GM10248 (cell line): ENCODE measurements at regions of chr20 and their contacts with region 1.

Region 1: DNA sequence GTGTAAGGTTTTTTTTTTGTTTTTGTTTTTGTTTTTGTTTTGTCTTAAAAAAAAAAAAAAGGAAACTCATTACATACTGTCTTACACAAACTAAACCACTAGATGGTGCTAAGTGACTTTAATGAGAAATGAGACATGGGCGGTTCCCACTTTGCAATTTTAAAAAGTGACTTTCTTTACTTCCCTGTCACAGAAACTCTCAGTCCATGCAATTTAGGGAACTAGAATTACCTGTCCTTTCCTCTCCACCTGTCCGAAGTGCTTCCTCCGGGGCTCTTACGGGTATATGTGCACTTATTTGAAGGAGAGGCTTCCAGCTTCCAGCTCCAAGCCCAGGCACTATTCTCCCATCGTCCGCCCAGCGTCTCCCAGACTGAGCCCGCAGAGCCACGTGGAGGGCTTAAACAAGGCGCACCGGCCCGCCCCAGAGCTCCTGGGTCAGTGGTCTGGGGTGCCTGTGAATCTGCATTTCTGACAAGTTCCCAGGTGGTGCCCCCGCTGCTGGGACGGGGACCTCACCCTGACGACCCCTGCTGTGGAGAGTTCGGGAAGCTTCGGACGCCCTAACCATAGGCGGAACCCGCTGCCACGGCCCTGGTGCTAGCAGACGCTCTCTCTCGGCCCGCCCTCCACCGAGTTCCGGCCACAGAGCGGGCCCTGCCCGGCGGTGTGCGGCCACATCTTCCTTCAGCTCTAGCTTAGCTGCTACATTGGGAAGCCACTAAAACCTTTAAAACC is 26.1 kb downstream of the BFSP1 start:
- DNase-seq: peak; percentile 73
- CTCF ChIP-seq: peak; percentile 56

Region 2: DNA sequence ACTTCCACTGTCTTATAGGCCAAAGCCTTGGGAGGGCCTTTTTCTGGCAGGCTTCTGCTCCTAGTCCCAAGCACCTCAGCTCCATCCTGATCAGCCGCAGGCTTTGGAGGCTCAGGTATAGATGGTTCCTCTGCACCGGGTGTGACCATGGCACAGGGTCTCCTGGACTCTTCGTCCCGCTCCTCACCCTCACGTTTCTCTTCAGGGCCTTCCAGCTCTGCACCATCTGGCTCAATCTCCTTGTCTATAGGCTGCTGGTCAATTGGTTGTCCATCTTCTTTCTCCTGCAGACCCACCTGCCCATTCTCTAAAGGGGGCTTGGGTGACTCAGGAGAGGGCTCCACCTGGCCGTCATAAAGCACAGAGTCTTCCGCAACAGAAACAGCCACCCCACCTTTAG is 10.9 kb before region 1 on chr20:
- CTCF ChIA-PET with region 1: interaction called, 19 read pairs
- POLR2A ChIA-PET with region 1: no interaction called
- DNase-seq: no peak
- CTCF ChIP-seq: no peak

Region 3: DNA sequence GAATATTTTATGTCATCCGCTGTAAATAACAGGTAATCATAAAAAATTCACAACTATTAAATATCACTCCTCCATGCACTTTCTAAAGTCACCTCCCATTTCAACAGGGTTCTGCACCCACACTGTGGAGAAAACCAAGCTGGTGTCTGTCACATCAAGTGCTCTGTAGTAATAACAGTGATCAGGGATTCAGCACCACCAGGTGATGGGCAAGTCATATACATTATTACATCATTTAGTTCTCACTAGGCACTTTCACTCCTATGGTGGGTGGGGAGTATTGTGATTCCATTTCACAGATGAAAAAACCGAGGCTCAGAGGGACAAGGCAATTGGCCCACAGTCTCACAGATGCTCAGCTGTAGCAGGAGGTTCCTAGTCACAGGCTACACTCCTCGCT is 17.5 kb after region 1 on chr20:
- CTCF ChIA-PET with region 1: interaction called, 15 read pairs
- POLR2A ChIA-PET with region 1: no interaction called
- DNase-seq: no peak
- CTCF ChIP-seq: no peak

Region 4: GRCh38 chr20:17710379-17711266 is 205.6 kb after region 1 on chr20:
- CTCF ChIA-PET with region 1: no interaction called
- POLR2A ChIA-PET with region 1: no interaction called
- DNase-seq: no peak
- CTCF ChIP-seq: no peak

Region 5: DNA sequence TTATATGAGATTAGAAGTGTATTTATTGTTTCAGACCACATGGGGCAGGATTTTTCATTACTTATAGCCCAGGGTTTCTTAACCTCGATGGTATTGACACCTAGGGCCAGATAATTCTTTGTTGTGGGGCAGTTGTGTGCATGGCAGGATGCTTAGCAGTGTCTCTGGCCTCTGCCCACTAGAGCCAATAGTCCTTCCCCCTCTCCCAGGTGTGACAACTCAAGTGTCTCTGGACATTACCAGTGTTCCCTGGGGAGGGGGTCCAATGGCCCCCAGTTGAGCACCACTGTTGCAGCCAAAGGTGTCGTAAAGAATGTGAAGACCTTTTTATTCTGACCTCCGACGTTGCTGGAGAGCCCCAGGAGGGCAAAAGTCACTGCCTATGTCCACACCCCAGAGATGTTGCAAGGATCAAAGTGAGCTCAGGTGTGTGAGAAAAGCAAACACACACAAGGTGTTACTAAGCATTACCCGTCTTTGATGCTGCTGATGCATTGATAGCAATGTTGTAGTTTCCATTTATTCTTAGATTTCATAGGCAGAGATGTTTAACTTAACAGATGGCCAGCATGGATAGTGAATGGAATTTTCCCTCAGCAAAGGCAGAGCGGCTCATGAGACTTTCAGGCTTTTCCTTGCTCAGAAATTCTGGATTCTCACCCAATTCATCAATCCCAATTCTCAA is 216.9 kb after region 1 on chr20:
- CTCF ChIA-PET with region 1: no interaction called
- POLR2A ChIA-PET with region 1: no interaction called
- DNase-seq: no peak
- CTCF ChIP-seq: no peak

Region 6: DNA sequence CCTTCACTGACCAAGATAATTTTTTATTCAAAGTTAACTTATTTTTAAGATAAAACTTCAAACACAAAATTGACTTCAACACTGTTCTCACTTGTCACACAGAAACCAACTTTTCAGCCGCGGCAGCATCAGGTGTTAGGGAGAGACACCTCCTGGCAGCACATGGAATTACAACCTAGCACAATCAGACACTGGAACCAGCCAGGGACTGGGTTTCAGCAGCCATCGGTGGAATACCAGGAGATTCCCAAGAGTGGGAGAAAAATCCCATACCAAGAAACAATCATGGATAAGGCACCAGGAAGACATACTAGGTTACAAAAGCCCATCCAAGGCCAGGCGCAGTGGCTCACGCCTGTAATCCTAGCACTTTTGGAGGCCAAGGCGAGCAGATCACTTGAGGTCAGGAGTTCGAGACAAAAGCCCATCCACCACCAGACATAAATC is 393.5 kb after region 1 on chr20:
- CTCF ChIA-PET with region 1: interaction called, 12 read pairs
- POLR2A ChIA-PET with region 1: interaction called, 3 read pairs
- DNase-seq: peak; percentile 65
- CTCF ChIP-seq: peak; percentile 85